HepG2 (cell line): ENCODE measurements at regions of chr16 and their contacts with region 1.

Region 1: GRCh38 chr16:80459331-80459777 is 81.4 kb upstream of the DYNLRB2 start:
- DNase-seq: no peak
- ATAC-seq: no peak
- H3K4me3 ChIP-seq: no peak overlapping the region
- H3K27ac ChIP-seq: no peak overlapping the region
- H3K4me1 ChIP-seq: peaks cover 21% of the 10 kb centered on the region
- H3K27me3 ChIP-seq: peaks cover 0 to 28% of the 10 kb centered on the region in 2 experiments; a peak in 4 of 5 replicates
- CTCF ChIP-seq: no peak
- EP300 ChIP-seq: no peak
- POLR2A ChIP-seq: no peak
- RAD21 ChIP-seq: no peak

Region 2: GRCh38 chr16:80499960-80500515 is 40.7 kb after region 1 on chr16:
- CTCF ChIA-PET with region 1: no interaction called
- POLR2A ChIA-PET with region 1: no interaction called
- in situ Hi-C with region 1: no loop called
- intact Hi-C with region 1: loop called (anchors 1 kb)
- DNase-seq: no peak
- ATAC-seq: no peak
- H3K4me3 ChIP-seq: no peak overlapping the region
- H3K27ac ChIP-seq: no peak overlapping the region
- H3K4me1 ChIP-seq: no peaks in the 10 kb centered on the region
- H3K27me3 ChIP-seq: no peaks in the 10 kb centered on the region; a peak in 1 of 5 replicates
- CTCF ChIP-seq: no peak
- EP300 ChIP-seq: no peak
- POLR2A ChIP-seq: no peak
- RAD21 ChIP-seq: no peak

Region 3: DNA sequence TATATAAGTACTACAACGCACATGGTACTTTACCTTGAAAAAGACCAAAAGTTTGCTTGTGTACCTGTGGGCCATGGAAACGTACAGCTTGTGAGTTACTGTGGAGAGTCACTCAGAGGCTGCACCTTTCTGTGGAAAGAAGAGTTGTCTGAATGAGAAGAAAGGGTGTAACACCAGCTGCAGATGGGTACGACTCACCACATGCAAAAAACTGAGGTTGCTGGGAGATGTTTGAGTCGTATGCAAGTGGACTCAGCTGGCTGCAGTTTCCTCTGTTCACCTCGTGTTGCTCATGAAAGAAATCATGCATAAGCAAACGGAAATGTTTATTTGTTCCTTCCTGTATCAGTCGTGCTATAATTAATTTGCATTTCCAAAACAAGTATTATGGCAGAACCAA is 59.1 kb after region 1 on chr16:
- CTCF ChIA-PET with region 1: no interaction called
- POLR2A ChIA-PET with region 1: no interaction called
- in situ Hi-C with region 1: loop called (anchors 10 kb)
- intact Hi-C with region 1: no loop called
- DNase-seq: no peak
- ATAC-seq: no peak
- H3K4me3 ChIP-seq: no peak overlapping the region
- H3K27ac ChIP-seq: no peak overlapping the region
- H3K4me1 ChIP-seq: no peaks in the 10 kb centered on the region
- H3K27me3 ChIP-seq: no peaks in the 10 kb centered on the region; a peak in 1 of 5 replicates
- CTCF ChIP-seq: no peak
- EP300 ChIP-seq: no peak
- POLR2A ChIP-seq: no peak
- RAD21 ChIP-seq: no peak